PC-3 (cell line): ENCODE measurements at regions of chr3 and their contacts with region 1.

Region 1: DNA sequence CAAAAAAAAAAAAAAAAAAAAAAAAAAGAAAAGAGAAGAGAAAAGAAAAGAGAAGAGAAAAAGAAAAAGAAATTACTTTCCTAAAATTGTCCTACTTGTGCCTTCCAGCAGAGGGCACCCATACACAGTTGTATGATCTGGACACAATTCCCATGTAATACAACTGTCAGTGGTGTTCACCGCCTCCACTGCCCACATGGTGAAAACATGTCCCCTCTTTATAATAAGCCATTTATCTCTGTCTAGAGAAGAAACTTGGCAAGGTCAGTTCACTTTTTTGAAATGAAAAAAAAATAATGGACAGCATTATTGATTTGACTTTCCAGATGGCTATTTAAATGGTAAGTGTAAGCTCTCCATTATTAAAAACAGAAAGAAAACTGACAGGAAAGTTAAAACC is 459.4 kb downstream of the GBE1 start:
- DNase-seq: peak; percentile 68
- ATAC-seq: peak; percentile 64
- H3K4me3 ChIP-seq: no peak overlapping the region
- H3K27ac ChIP-seq: no peak overlapping the region
- H3K4me1 ChIP-seq: peaks cover 20% of the 10 kb centered on the region
- H3K27me3 ChIP-seq: no peaks in the 10 kb centered on the region
- CTCF ChIP-seq: peak; percentile 77

Region 2: GRCh38 chr3:81249540-81250029 is 52.5 kb before region 1 on chr3:
- CTCF ChIA-PET with region 1: interaction called, 4 read pairs
- POLR2A ChIA-PET with region 1: no interaction called
- intact Hi-C with region 1: loop called (anchors 1 kb)
- DNase-seq: peak; percentile 99
- ATAC-seq: peak; percentile 98
- H3K4me3 ChIP-seq: peak overlapping the region; percentile 26; the same call in 1 of the 2 replicates
- H3K27ac ChIP-seq: peak overlapping the region; percentile 60
- H3K4me1 ChIP-seq: peaks cover 23% of the 10 kb centered on the region
- H3K27me3 ChIP-seq: no peaks in the 10 kb centered on the region
- CTCF ChIP-seq: no peak

Region 3: GRCh38 chr3:81338676-81339555 is 36.9 kb after region 1 on chr3:
- CTCF ChIA-PET with region 1: interaction called, 12 read pairs
- POLR2A ChIA-PET with region 1: no interaction called
- intact Hi-C with region 1: loop called (anchors 1 kb)
- DNase-seq: peak; percentile 88
- ATAC-seq: peak; percentile 85
- H3K4me3 ChIP-seq: peak overlapping the region; percentile 8; the same call in 1 of the 2 replicates
- H3K27ac ChIP-seq: peak overlapping the region; percentile 3
- H3K4me1 ChIP-seq: peaks cover 24% of the 10 kb centered on the region
- H3K27me3 ChIP-seq: no peaks in the 10 kb centered on the region
- CTCF ChIP-seq: peak; percentile 92

Region 4: DNA sequence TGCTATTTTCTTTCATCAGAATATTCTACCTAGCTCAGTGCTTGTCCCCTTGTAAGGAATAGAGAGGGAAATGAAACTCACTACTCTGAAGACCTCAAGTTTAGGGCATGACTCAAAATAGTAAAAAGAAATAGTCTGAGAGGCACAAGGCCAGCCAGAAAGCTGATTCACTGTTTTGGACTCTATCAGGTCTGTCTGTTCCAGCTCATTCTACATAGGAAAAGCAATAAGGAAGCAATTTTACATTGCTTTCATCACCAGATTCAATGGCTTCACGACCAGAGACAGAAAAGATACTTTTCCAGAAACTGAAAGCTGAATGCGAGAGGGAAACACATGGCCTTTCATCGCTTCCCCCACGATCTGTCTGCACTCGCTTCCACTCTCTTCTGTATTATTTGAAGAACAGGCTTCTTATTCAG is 183.4 kb after region 1 on chr3:
- CTCF ChIA-PET with region 1: no interaction called
- POLR2A ChIA-PET with region 1: no interaction called
- intact Hi-C with region 1: loop called (anchors 5 kb)
- DNase-seq: peak; percentile 73
- ATAC-seq: peak; percentile 98
- H3K4me3 ChIP-seq: no peak overlapping the region
- H3K27ac ChIP-seq: no peak overlapping the region
- H3K4me1 ChIP-seq: peaks cover 5% of the 10 kb centered on the region
- H3K27me3 ChIP-seq: no peaks in the 10 kb centered on the region
- CTCF ChIP-seq: no peak

Region 5: GRCh38 chr3:81643721-81644120 is 341.7 kb after region 1 on chr3:
- CTCF ChIA-PET with region 1: no interaction called
- POLR2A ChIA-PET with region 1: no interaction called
- intact Hi-C with region 1: loop called (anchors 2 kb)
- DNase-seq: peak; percentile 58
- ATAC-seq: peak; percentile 85
- H3K4me3 ChIP-seq: no peak overlapping the region
- H3K27ac ChIP-seq: no peak overlapping the region
- H3K4me1 ChIP-seq: peaks cover 9% of the 10 kb centered on the region; the same call in 1 of the 2 replicates
- H3K27me3 ChIP-seq: no peaks in the 10 kb centered on the region
- CTCF ChIP-seq: peak; percentile 74